Psoas muscle (tissue), 8 donors: ENCODE measurements at regions of chr16 and their contacts with region 1.

Region 1: GRCh38 chr16:47028767-47029377 is 55.4 kb upstream of the DNAJA2 start:
- DNase-seq: no peak
- ATAC-seq: no peak
- H3K4me3 ChIP-seq: no peak overlapping the region
- H3K27ac ChIP-seq: no peak overlapping the region
- H3K4me1 ChIP-seq: no peaks in the 10 kb centered on the region
- H3K27me3 ChIP-seq: no peaks in the 10 kb centered on the region
- CTCF ChIP-seq: no peak

Region 2: GRCh38 chr16:46866286-46866685 is 162.6 kb before region 1 on chr16:
- intact Hi-C with region 1: loop called in 1 of 2 experiments (anchors 5 kb)
- DNase-seq: no peak
- ATAC-seq: no peak
- H3K4me3 ChIP-seq: no peak overlapping the region
- H3K27ac ChIP-seq: no peak overlapping the region
- H3K4me1 ChIP-seq: peaks cover 5% of the 10 kb centered on the region
- H3K27me3 ChIP-seq: no peaks in the 10 kb centered on the region
- CTCF ChIP-seq: no peak